GM10248 (cell line): ENCODE measurements at regions of chr5 and their contacts with region 1.

Region 1: DNA sequence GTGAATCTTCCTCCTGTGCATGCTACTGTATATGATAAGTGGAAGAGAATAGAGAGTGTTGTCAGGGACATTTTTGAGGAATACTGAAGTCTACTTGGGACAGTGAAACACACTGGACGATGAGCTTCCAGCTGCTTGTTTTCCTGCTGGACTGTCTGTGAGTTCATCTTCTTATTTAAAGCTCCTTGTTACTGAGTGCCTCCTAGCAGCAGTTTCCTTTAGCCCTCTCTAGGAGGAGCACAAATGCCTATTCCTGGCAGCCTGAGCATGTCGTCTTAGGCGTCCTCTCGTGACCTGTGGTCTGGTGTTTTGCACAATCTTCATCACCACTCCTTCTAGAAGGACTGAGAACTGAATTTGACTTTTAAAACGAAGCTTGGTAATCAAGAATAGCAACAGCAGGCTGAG is 43.8 kb downstream of the ANKRD33B start:
- DNase-seq: no peak
- CTCF ChIP-seq: peak; percentile 44

Region 2: DNA sequence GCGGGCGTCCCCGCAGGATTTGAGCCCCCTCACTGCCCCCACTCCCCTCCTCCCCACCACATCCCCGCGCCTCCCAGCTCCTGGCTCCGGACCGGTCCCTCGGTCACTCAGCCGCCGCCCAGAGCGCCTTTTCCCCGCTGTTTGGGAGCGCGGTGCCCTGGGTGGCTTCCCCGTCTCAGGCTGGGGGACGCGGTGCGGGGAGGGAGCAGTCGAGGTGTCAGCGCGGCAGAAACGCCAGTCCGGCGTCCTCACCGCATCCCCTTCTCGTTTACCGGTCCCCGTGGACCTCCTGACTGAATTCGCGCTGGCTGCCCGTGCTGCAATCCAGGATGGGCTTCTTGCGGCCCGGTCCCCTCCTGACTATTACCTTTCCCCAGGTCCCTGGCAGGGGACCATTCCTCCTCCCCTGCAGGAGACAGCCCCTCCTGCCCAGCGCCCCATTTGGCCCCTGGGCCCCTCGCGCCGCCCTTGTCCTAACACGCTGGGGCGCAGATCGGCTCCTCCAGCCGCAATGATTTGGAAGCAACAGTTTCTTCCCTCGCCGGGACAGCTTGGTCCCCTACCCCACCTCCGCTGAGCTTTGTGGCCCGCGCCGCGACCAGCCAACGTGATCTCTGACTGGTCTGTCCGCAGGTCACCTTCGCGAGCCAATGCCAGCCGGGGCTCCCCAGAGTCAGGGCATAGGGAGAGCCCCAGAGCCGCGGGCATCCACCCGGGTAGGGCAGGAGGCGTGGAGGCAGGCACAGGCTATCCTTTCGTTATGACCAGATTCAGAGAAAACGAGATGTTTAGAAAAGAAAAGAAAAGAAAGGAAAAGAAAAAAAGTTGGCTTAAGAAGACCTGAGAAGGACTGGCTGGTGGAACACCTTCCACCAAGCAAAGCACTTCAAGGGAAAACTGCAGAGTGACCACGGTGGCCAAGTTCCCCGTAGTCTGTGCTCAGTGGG is 42.6 kb before region 1 on chr5:
- CTCF ChIA-PET with region 1: interaction called, 10 read pairs
- POLR2A ChIA-PET with region 1: interaction called, 6 read pairs
- DNase-seq: no peak
- CTCF ChIP-seq: no peak

Region 3: GRCh38 chr5:10577371-10578292 is 30.0 kb before region 1 on chr5:
- CTCF ChIA-PET with region 1: interaction called, 14 read pairs
- POLR2A ChIA-PET with region 1: interaction called, 3 read pairs
- DNase-seq: no peak
- CTCF ChIP-seq: no peak

Region 4: GRCh38 chr5:10590226-10590999 is 17.3 kb before region 1 on chr5:
- CTCF ChIA-PET with region 1: interaction called, 22 read pairs
- POLR2A ChIA-PET with region 1: interaction called, 5 read pairs
- DNase-seq: no peak
- CTCF ChIP-seq: no peak

Region 5: GRCh38 chr5:10595678-10596309 is 11.9 kb before region 1 on chr5:
- CTCF ChIA-PET with region 1: interaction called, 22 read pairs
- POLR2A ChIA-PET with region 1: interaction called, 5 read pairs
- DNase-seq: no peak
- CTCF ChIP-seq: no peak

Region 6: GRCh38 chr5:10621832-10622231 is 14.2 kb after region 1 on chr5:
- CTCF ChIA-PET with region 1: interaction called, 148 read pairs
- POLR2A ChIA-PET with region 1: interaction called, 9 read pairs
- DNase-seq: no peak
- CTCF ChIP-seq: no peak

Region 7: GRCh38 chr5:10635257-10635866 is 27.7 kb after region 1 on chr5:
- CTCF ChIA-PET with region 1: interaction called, 148 read pairs
- POLR2A ChIA-PET with region 1: interaction called, 13 read pairs
- DNase-seq: peak; percentile 85
- CTCF ChIP-seq: no peak